PC-9 (cell line): ENCODE measurements at regions of chr3 and their contacts with region 1.

Region 1: GRCh38 chr3:108662130-108662738 is 72.7 kb downstream of the DZIP3 start:
- DNase-seq: peak; percentile 19 to 66
- H3K4me3 ChIP-seq: no peak overlapping the region
- H3K27ac ChIP-seq: no peak overlapping the region
- H3K4me1 ChIP-seq: no peaks in the 10 kb centered on the region
- H3K27me3 ChIP-seq: no peaks in the 10 kb centered on the region
- CTCF ChIP-seq: peak; percentile 98

Region 2: GRCh38 chr3:107627962-107628542 is 1034.2 kb before region 1 on chr3:
- CTCF ChIA-PET with region 1: no interaction called
- POLR2A ChIA-PET with region 1: no interaction called
- intact Hi-C with region 1: no loop called
- DNase-seq: no peak
- H3K4me3 ChIP-seq: no peak overlapping the region
- H3K27ac ChIP-seq: no peak overlapping the region
- H3K4me1 ChIP-seq: no peaks in the 10 kb centered on the region
- H3K27me3 ChIP-seq: no peaks in the 10 kb centered on the region
- CTCF ChIP-seq: peak; percentile 63

Region 3: GRCh38 chr3:108818404-108818803 is 156.2 kb after region 1 on chr3:
- CTCF ChIA-PET with region 1: interaction called, 3 read pairs
- POLR2A ChIA-PET with region 1: no interaction called
- intact Hi-C with region 1: loop called (anchors 2 kb)
- DNase-seq: peak in 1 of 2 experiments; percentile 20
- H3K4me3 ChIP-seq: no peak overlapping the region
- H3K27ac ChIP-seq: no peak overlapping the region
- H3K4me1 ChIP-seq: no peaks in the 10 kb centered on the region
- H3K27me3 ChIP-seq: no peaks in the 10 kb centered on the region
- CTCF ChIP-seq: peak; percentile 59

Region 4: GRCh38 chr3:108879916-108880315 is 217.7 kb after region 1 on chr3:
- CTCF ChIA-PET with region 1: no interaction called
- POLR2A ChIA-PET with region 1: no interaction called
- intact Hi-C with region 1: loop called (anchors 2 kb)
- DNase-seq: peak in 1 of 2 experiments; percentile 18
- H3K4me3 ChIP-seq: no peak overlapping the region
- H3K27ac ChIP-seq: no peak overlapping the region
- H3K4me1 ChIP-seq: no peaks in the 10 kb centered on the region
- H3K27me3 ChIP-seq: no peaks in the 10 kb centered on the region
- CTCF ChIP-seq: peak; percentile 71

Region 5: GRCh38 chr3:108914774-108915641 is 252.8 kb after region 1 on chr3:
- CTCF ChIA-PET with region 1: interaction called, 3 read pairs
- POLR2A ChIA-PET with region 1: no interaction called
- intact Hi-C with region 1: loop called (anchors 1 kb)
- DNase-seq: peak; percentile 54 to 61
- H3K4me3 ChIP-seq: no peak overlapping the region
- H3K27ac ChIP-seq: no peak overlapping the region
- H3K4me1 ChIP-seq: peaks cover 6% of the 10 kb centered on the region; the same call in 1 of the 2 replicates
- H3K27me3 ChIP-seq: no peaks in the 10 kb centered on the region
- CTCF ChIP-seq: peak; percentile 99

Region 6: DNA sequence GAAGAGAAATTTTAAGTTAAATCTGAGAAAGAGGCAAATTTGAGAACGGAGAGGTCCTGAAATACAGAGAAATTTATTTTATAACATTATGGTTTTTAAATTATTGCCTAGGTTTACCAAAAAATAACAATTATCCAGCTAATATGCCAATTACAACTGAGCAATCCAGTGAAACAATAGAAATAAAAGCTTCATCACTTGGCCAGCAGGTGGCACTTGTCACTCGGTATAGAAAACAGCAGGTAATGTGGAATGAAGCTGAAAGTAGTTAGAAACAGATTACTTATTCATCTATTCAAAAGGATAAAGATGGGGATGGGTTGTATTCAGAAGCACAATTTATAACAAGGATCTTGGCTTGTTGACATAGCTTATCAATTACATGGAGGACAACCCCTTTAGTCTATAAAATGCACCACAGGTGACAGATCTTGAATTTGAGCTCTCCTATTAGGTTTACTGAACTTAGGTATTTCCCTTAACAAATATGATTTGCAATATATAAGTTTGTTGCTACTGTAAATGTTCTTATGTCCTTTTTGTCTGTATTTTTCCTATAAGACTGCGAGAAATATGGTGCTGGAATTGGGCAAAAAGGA is 361.5 kb after region 1 on chr3:
- CTCF ChIA-PET with region 1: no interaction called
- POLR2A ChIA-PET with region 1: no interaction called
- intact Hi-C with region 1: loop called (anchors 5 kb)
- DNase-seq: peak in 1 of 2 experiments; percentile 37
- H3K4me3 ChIP-seq: no peak overlapping the region
- H3K27ac ChIP-seq: no peak overlapping the region
- H3K4me1 ChIP-seq: no peaks in the 10 kb centered on the region
- H3K27me3 ChIP-seq: no peaks in the 10 kb centered on the region
- CTCF ChIP-seq: peak; percentile 94

Region 7: DNA sequence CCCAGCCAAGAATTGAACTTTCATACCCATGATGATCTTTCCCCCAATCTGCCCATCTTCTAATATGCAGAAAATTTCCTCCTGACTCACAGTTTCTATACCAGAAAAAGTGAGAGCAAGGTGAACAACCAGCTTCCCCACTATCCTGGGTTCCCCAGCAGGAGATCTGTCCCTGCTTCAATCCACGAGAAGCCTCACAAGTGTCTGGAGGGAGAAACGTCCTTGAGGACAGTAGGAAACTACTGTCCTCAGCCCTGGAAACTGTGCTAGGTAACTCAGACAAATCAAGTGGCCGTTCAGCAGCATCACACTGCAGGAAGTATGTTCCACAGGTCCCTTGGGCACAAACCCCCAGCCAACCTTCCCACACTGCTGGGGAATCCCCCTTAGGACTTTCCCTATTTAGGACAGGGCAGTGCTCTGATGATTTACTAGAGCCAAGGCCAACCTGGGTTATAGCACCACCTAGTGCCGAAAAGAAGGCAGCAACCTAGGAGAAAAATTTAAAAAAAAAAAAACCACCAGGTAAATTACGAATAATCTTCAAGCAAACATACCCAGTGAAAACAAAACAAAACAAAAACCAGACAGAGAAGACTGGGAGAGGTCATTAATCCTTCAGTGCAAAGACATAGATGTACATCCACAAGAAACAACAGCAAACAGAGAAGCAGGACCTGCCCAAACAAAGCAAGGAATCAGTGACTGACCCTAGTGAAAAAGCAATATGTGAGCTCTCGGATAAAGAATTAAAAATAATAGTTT is 419.7 kb after region 1 on chr3:
- CTCF ChIA-PET with region 1: interaction called, 4 read pairs
- POLR2A ChIA-PET with region 1: no interaction called
- intact Hi-C with region 1: loop called (anchors 2 kb)
- DNase-seq: peak; percentile 41 to 45
- H3K4me3 ChIP-seq: no peak overlapping the region
- H3K27ac ChIP-seq: no peak overlapping the region
- H3K4me1 ChIP-seq: no peaks in the 10 kb centered on the region
- H3K27me3 ChIP-seq: no peaks in the 10 kb centered on the region
- CTCF ChIP-seq: peak; percentile 95